ENCODE measurements at regions of chr16 and their contacts with region 1.

Region 1: DNA sequence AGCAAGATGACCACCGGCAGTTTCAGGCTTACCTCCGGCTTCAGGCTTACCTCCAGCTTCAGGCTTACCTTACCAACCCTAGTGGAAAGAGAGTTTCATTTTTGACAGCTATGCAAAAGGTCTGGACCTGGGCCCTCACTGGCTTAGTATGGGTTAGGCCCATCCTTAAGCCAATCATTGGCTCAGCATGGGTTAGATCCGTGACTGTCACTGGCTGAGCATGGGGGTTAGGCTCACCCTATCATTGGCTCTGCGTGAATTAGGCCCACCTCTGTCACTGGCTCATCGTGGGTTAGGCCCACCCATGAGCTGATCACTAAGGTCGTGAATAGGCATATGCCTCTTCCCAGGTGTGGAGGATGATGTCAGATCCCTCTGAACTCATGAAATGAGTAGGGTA is 8.1 kb downstream of the NDE1 start:
- DNase-seq: no peak
- ATAC-seq: peak; percentile 84
- H3K4me3 ChIP-seq: no peak overlapping the region
- H3K27ac ChIP-seq: no peak overlapping the region
- H3K4me1 ChIP-seq: peaks cover 20% of the 10 kb centered on the region
- H3K27me3 ChIP-seq: no peaks in the 10 kb centered on the region
- CTCF ChIP-seq: no peak
- EP300 ChIP-seq: no peak
- POLR2A ChIP-seq: no peak
- RAD21 ChIP-seq: no peak

Region 2: DNA sequence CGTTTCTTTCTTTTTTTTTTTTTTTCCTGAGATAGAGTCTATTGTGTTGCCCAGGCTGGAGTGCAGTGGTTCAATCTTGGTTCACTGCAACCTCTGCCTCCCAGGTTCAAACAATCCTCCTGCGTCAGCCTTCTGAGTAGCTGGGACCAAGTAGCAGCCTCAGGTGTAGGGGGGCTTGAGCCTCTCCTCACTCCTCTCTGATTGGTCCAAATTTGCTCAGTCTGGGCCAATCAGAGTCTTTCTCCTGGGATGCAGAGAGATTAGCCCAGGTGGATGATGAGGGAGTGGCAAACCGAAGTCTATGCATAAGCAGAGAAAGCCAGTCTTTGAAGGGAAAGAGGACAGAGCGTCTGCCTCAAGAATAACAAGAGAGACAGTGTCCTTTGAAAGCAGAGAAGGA is 124.8 kb before region 1 on chr16:
- CTCF ChIA-PET with region 1: no interaction called
- POLR2A ChIA-PET with region 1: no interaction called
- RAD21 ChIA-PET with region 1: no interaction called
- SMC1A ChIA-PET with region 1: no interaction called
- in situ Hi-C with region 1: no loop called
- intact Hi-C with region 1: no loop called
- DNase-seq: no peak
- ATAC-seq: no peak
- H3K4me3 ChIP-seq: no peak overlapping the region
- H3K27ac ChIP-seq: no peak overlapping the region
- H3K4me1 ChIP-seq: no peaks in the 10 kb centered on the region
- H3K27me3 ChIP-seq: no peaks in the 10 kb centered on the region; a peak in 1 of 4 replicates
- CTCF ChIP-seq: no peak
- EP300 ChIP-seq: no peak
- POLR2A ChIP-seq: no peak
- RAD21 ChIP-seq: no peak

Region 3: DNA sequence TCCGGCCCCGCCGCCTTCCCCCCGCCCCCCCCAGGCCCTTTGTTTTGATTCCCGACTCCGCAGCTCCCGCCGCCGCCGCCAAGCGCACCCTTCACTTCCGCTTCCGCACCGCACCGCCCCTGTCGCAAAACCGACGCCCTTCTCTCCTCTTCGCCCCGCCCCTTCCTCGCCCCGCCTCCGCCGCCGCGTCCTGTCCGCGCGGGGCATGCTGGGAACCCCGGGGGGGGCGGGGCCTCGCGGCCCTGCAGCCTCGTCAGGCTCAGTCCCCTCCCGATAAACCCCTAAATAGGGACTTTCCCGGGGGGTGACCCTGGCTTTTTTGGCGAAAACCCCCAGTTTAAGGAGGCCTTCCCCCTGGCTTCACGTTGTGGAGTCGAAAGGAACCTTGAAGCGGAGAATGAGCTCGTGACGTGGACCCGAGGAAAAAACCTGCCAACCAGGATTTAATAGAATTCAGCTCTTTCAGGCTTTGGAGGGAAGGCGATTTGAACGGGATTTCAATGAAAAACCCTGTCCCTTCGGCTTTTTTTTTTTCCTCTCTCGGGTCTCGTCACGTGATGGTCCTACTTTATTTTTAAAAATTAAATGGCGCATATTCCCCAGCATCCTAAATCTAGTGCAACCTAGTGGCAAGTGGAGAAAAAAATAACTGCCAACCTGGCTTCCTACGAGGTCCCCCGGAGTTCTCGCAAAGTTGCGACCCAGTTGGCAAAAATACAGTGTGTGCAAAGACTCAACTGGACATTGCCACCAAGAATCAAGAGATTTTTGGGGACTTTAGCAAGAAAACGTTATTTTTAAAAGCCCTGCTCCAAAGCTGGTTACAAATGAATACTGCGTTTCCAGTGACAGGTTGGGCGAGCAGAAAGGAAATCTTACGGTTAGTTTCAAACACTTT is 14.9 kb before region 1 on chr16 and contains the start of gene MARF1:
- CTCF ChIA-PET with region 1: interaction called, 14 read pairs
- POLR2A ChIA-PET with region 1: interaction called, 29 read pairs
- RAD21 ChIA-PET with region 1: interaction called, 4 read pairs
- SMC1A ChIA-PET with region 1: interaction called, 43 read pairs
- in situ Hi-C with region 1: no loop called
- intact Hi-C with region 1: no loop called
- DNase-seq: peak; percentile 77
- ATAC-seq: peak; percentile 63
- H3K4me3 ChIP-seq: peak within 1 kb of the TSS; percentile 87
- H3K27ac ChIP-seq: peak within 1 kb of the TSS; percentile 97
- H3K4me1 ChIP-seq: peaks cover 35% of the 10 kb centered on the region
- H3K27me3 ChIP-seq: no peaks in the 10 kb centered on the region
- CTCF ChIP-seq: peak; percentile 19 to 28 (median 24); a peak in 2 of 6 replicates
- EP300 ChIP-seq: no peak; a peak in 1 of 4 replicates
- POLR2A ChIP-seq: peak; percentile 64; the same call in 1 of the 2 replicates
- RAD21 ChIP-seq: 0 out of 2 replicates have a peak, but pooled peaks have one; percentile 7
- polyA plus RNA-seq, gene MARF1: 4.5 to 5.9 TPM

Region 4: DNA sequence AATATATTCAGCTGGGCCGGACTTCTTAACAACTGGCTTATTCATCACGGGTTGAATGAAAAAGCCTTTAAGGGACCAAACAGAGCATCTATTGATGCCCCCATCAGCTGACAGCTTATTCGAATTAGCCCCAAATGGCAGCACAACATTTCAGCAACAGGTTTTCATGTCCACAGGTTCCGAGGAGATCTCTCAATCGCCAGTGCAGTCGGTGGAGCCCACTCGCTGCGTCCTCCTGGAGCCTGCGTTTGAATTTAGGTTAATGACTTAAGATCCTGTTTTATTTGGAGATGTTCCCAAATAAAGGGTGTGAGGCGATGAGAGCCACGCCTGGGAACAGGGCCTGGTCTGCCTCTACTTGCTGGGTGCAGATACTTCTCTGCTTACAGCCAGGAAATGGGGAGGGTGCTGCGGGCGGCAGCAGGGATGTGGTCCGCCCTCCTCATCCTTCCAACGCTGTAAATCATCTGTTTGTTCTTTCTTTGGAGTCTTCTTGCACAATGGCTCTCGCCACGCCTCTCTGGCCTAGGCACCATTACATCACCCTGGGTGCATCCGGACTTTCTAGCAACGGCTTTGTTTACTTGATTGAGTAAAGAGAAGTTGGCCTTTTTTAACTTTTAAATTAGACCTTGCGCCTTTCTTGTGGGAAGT is 14.5 kb after region 1 on chr16:
- CTCF ChIA-PET with region 1: no interaction called
- POLR2A ChIA-PET with region 1: interaction called, 11 read pairs
- RAD21 ChIA-PET with region 1: interaction called, 3 read pairs
- SMC1A ChIA-PET with region 1: interaction called, 4 read pairs
- in situ Hi-C with region 1: no loop called
- intact Hi-C with region 1: no loop called
- DNase-seq: no peak
- ATAC-seq: no peak
- H3K4me3 ChIP-seq: no peak overlapping the region
- H3K27ac ChIP-seq: no peak overlapping the region
- H3K4me1 ChIP-seq: no peaks in the 10 kb centered on the region
- H3K27me3 ChIP-seq: no peaks in the 10 kb centered on the region
- CTCF ChIP-seq: no peak
- EP300 ChIP-seq: no peak
- POLR2A ChIP-seq: no peak
- RAD21 ChIP-seq: no peak

Region 5: DNA sequence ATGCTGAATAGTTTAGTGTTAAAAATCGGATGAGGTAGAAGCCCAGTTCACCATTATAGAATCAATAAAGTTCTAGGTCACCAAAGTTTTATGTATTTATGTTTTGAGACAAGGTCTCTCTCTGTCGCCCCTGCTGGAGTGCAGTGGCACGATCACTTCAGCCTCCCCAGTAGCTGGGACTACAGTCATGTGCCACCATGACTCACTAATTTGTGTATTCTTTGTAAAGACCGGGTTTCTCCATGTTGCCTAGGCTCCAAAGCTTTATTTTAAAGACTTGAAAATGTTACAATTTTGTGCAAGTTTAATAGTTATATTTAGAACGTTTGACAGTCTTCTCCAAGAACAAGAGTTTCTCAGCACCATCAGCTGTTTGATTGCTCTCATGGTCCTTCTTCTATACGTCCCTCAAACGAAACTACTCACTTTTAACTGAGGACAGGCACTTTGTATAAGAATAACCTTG is 24.0 kb after region 1 on chr16:
- CTCF ChIA-PET with region 1: interaction called, 10 read pairs
- POLR2A ChIA-PET with region 1: no interaction called
- RAD21 ChIA-PET with region 1: no interaction called
- SMC1A ChIA-PET with region 1: interaction called, 4 read pairs
- in situ Hi-C with region 1: no loop called
- intact Hi-C with region 1: no loop called
- DNase-seq: no peak
- ATAC-seq: peak; percentile 90
- H3K4me3 ChIP-seq: no peak overlapping the region
- H3K27ac ChIP-seq: no peak overlapping the region
- H3K4me1 ChIP-seq: no peaks in the 10 kb centered on the region
- H3K27me3 ChIP-seq: no peaks in the 10 kb centered on the region
- CTCF ChIP-seq: peak; percentile 42 to 58 (median 51)
- EP300 ChIP-seq: no peak
- POLR2A ChIP-seq: no peak
- RAD21 ChIP-seq: peak; percentile 25; the same call in 1 of the 2 replicates